CD4-positive, alpha-beta memory T cell (primary cell): ENCODE measurements at regions of chr16 and their contacts with region 1.

Region 1: DNA sequence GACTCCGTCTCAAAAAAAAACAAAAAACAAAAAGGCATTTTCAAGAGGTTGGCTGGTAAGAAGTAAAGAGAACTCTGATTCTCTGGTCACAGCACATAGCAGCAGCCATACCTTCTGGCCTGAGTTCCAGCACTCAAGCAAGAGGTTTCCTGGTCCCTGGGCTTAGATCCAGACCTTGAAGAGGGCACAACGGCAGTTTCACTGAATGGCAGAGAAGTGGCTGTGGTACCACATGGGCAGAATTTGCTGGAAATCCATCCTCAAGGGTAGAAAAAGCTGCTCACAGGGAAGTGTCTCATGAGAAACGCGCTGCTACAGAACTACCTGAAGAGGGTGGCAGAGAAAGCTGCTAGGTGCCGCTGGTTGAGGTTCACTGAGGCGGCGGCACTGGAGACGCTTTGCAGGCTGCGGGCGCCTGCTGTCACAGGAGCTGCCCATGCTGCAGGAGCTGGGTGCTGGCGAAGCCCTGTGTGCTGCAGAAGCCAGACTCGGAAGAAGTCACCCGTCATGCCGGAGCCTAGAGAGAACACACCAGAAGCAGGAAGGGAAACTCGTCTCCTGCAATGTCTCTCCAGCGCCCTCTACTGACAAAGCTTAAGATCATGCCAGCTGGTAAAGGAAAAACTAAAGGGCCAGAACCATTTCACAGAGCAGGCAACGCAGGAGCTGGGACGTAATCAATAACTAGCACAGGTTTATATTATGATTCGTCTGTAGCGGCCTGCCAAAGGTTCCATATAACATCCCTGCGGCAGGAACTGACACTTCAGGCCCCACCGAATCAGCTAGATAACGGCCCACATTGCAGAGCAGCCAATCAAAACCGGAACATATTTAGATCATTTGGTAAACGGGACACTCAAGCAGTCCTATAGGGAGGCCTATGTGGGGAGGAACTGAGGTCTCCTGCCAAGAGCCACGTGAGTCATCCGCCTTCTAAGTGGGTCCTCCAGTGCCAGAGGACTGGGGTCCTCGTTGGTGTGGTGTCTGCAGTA is 5.4 kb upstream of the ZNF213 start:
- DNase-seq: peak; percentile 89 to 92 (median 90)
- H3K4me3 ChIP-seq: peak overlapping the region; percentile 56 to 64
- H3K4me3 Mint-ChIP-seq: peak overlapping the region; percentile 88 to 95 (median 94)
- H3K27ac ChIP-seq: peak overlapping the region; percentile 46
- H3K27ac Mint-ChIP-seq: peak overlapping the region; percentile 83 to 96 (median 89)
- H3K4me1 ChIP-seq: peaks cover 52% of the 10 kb centered on the region
- H3K4me1 Mint-ChIP-seq: peaks cover 26 to 70% (median 42%) of the 10 kb centered on the region in 4 donors
- H3K27me3 ChIP-seq: no peaks in the 10 kb centered on the region
- H3K27me3 Mint-ChIP-seq: no peaks in the 10 kb centered on the region

Region 2: DNA sequence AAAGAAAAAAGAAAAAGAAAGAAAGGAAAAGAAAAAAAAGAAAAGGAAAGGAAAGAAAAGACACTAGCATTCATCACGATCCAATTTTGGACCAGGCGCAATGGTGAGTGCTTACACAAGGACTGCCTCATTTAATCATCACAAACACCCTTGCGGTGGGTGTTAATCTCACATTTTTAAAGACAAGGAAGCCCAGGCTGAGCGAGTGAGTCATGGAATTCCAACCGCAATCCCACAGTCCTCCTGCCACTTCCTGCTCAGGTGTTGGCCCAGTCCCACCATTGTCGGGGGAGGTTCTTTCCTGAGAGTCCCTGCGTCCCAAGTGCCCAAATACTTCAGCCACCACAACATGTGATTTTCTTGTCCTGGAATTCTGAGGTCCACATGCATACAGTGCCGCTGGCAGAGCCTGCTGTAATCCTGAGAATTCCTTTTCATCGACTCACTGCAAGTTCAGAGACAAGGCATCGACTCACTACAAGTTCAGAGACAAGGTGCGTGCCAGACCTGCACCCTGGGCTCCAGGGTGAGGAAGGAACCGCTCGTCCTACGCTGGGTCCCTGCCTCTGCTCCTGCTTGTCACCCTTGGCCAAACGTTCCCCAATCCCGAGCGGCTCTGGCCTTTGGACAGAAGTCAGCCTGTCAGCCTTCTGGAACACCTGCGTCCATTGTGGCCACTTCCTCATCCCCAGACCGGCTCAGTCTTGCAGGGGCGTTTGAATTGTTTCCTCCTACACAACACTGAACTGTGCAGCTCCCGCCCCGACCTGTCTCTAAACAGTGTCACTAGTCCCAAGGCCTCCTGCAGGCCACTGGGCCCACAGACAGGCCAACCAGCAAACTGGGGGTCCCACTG is 293.6 kb before region 1 on chr16:
- CTCF ChIA-PET with region 1: no interaction called
- POLR2A ChIA-PET with region 1: no interaction called
- intact Hi-C with region 1: no loop called
- DNase-seq: no peak
- H3K4me3 ChIP-seq: no peak overlapping the region
- H3K4me3 Mint-ChIP-seq: no peak overlapping the region
- H3K27ac ChIP-seq: no peak overlapping the region
- H3K27ac Mint-ChIP-seq: no peak overlapping the region
- H3K4me1 ChIP-seq: peaks cover 15% of the 10 kb centered on the region
- H3K4me1 Mint-ChIP-seq: peaks cover 4 to 33% (median 18%) of the 10 kb centered on the region in 4 donors
- H3K27me3 ChIP-seq: no peaks in the 10 kb centered on the region
- H3K27me3 Mint-ChIP-seq: peaks cover 4 to 15% of the 10 kb centered on the region in 2 donors

Region 3: DNA sequence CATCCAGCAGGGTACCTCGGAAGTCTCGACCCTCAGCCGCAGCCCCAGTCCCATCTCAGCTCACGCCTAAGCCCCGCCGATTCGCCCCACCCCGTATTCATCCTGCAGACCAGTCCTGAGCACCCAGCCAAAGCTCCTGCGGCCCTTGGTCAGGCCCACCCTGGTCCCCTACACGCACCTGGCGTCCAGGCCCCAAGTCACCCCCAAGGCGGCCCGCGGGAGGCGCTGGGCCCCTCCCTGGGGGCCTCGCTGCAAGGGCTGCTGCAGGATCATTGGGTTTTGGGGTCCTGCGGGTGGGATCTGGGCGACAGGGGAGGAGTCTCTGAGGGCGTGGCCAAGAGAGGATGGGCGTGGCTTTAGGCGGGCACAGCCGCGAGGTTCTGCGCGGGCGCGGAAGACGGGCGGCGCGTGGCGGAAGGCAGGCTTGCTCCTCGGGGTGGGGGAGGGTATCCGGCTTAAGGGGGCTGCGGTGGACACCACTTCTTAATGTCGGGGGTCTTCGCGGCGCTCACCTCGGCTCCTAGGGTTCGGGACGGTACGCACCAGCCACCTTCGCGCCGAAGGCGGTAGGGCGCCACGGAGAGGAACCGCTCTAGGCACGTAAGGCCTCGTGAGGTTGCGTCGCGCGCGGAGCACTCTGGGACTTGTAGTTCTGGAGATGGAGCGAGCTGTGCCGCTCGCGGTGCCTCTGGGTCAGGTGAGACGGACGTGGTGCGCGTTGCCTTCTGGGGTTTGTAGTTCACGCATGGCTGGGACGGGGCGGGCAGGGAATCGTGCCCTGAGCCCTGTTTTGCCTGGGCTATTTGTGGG is 105.6 kb before region 1 on chr16 and contains the starts of genes HCFC1R1 and THOC6:
- CTCF ChIA-PET with region 1: interaction called, 277 read pairs
- POLR2A ChIA-PET with region 1: interaction called, 11 read pairs
- intact Hi-C with region 1: no loop called
- DNase-seq: peak; percentile 95 to 97 (median 95)
- H3K4me3 ChIP-seq: peak within 1 kb of the TSS; percentile 38 to 85
- H3K4me3 Mint-ChIP-seq: peak within 1 kb of the TSS; percentile 87 to 97 (median 93)
- H3K27ac ChIP-seq: peak within 1 kb of the TSS; percentile 90
- H3K27ac Mint-ChIP-seq: peak within 1 kb of the TSS; percentile 97 to 99 (median 99)
- H3K4me1 ChIP-seq: peaks cover 56% of the 10 kb centered on the region
- H3K4me1 Mint-ChIP-seq: peaks cover 22 to 67% (median 45%) of the 10 kb centered on the region in 4 donors
- H3K27me3 ChIP-seq: peaks cover 2% of the 10 kb centered on the region
- H3K27me3 Mint-ChIP-seq: no peaks in the 10 kb centered on the region
- total RNA-seq, gene HCFC1R1: 16.0 to 18.0 TPM
- total RNA-seq, gene THOC6: 18.4 to 22.5 TPM

Region 4: DNA sequence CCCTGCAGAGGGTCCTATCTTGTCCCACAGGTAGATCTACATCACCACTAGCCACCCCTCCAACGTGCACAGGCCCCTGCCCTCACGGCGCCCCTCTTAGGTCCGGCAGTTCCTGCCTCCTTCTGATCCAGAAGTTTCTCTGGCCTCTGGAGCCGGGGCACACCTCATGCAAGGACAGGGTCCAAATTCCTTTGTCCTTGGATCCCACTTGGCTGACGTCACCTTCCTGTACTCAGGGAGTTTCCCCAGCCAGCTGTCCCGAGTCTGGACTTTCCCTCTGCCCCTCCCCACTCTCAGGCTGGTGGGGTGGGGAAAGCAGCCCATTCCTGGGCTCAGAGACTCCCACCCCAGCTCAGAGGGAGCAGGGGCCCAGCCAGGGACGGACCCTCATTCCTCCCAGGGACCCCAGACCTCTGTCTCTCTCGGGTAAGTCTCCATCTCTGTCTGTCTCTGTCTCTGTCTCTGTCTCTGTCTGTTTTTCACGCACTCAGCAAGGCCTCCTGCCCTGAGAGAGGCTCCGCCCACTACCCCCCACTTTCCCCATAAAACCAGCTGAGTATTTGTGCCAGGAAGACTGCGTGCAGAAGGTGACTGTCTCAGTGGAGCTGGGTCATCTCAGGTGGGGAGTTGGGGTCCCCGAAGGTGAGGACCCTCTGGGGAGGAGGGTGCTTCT is 64.2 kb before region 1 on chr16 and contains the start of gene IL32:
- CTCF ChIA-PET with region 1: interaction called, 362 read pairs
- POLR2A ChIA-PET with region 1: interaction called, 129 read pairs
- intact Hi-C with region 1: no loop called
- DNase-seq: peak; percentile 64 to 85 (median 66)
- H3K4me3 ChIP-seq: peak within 1 kb of the TSS; percentile 98
- H3K4me3 Mint-ChIP-seq: peak within 1 kb of the TSS; percentile 98 to 100 (median 100)
- H3K27ac ChIP-seq: peak within 1 kb of the TSS; percentile 98
- H3K27ac Mint-ChIP-seq: peak within 1 kb of the TSS; percentile 91 to 99 (median 96)
- H3K4me1 ChIP-seq: peaks cover 72% of the 10 kb centered on the region
- H3K4me1 Mint-ChIP-seq: peaks cover 34 to 84% (median 55%) of the 10 kb centered on the region in 4 donors
- H3K27me3 ChIP-seq: no peaks in the 10 kb centered on the region
- H3K27me3 Mint-ChIP-seq: no peaks in the 10 kb centered on the region
- total RNA-seq, gene IL32: 752 to 810 TPM

Region 5: DNA sequence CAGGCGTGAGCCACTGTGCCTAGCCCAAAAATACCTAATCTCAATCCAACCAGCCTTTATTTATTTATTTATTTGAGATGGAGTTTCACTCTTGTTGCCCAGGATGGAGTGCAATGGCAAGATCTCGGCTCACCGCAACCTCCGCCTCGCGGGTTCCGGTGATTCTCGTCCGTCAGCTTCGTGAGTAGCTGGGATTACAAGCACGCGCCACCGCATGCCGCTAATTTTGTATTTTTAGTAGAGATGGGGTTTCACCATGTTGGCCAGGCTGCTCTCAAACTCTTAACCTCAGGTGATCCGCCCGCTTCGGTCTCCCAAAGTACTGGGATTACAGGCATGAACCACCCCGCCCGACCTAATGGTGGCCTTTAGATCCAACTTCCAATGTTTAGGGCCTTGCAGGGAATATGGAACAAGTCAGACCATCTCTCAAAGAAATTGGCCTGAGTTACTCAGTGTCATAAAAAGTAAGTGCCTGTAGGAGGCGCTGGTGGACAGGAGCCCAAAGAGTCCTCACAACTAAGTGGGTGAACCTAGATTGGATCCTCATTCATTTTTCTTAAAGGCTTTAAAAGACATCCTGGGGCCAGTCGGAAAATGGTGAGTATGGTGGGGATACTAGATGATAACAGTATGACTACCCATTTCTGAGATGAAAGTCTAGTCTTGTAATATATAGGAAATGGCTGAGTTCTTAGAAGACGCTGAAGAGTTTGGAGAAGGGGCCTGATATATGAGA is 35.0 kb before region 1 on chr16:
- CTCF ChIA-PET with region 1: interaction called, 376 read pairs
- POLR2A ChIA-PET with region 1: interaction called, 146 read pairs
- intact Hi-C with region 1: loop called (anchors 1 kb)
- DNase-seq: peak; percentile 58 to 76 (median 66)
- H3K4me3 ChIP-seq: no peak overlapping the region
- H3K4me3 Mint-ChIP-seq: peak overlapping the region in 5 of 8 donors; percentile 3 to 77 (median 22)
- H3K27ac ChIP-seq: no peak overlapping the region
- H3K27ac Mint-ChIP-seq: peak overlapping the region; percentile 17 to 95 (median 78)
- H3K4me1 ChIP-seq: peaks cover 45% of the 10 kb centered on the region
- H3K4me1 Mint-ChIP-seq: peaks cover 9 to 56% (median 32%) of the 10 kb centered on the region in 4 donors
- H3K27me3 ChIP-seq: no peaks in the 10 kb centered on the region
- H3K27me3 Mint-ChIP-seq: no peaks in the 10 kb centered on the region

Region 6: GRCh38 chr16:3150346-3151218 is 21.1 kb after region 1 on chr16:
- CTCF ChIA-PET with region 1: interaction called, 44 read pairs
- POLR2A ChIA-PET with region 1: interaction called, 123 read pairs
- intact Hi-C with region 1: loop called (anchors 1 kb)
- DNase-seq: peak; percentile 96 to 99 (median 97)
- H3K4me3 ChIP-seq: peak overlapping the region; percentile 77 to 92
- H3K4me3 Mint-ChIP-seq: peak overlapping the region; percentile 87 to 96 (median 91)
- H3K27ac ChIP-seq: peak overlapping the region; percentile 64
- H3K27ac Mint-ChIP-seq: peak overlapping the region; percentile 87 to 100 (median 95)
- H3K4me1 ChIP-seq: peaks cover 27% of the 10 kb centered on the region
- H3K4me1 Mint-ChIP-seq: peaks cover 22 to 47% (median 26%) of the 10 kb centered on the region in 4 donors
- H3K27me3 ChIP-seq: no peaks in the 10 kb centered on the region
- H3K27me3 Mint-ChIP-seq: peaks cover 3 to 8% of the 10 kb centered on the region in 2 donors

Region 7: DNA sequence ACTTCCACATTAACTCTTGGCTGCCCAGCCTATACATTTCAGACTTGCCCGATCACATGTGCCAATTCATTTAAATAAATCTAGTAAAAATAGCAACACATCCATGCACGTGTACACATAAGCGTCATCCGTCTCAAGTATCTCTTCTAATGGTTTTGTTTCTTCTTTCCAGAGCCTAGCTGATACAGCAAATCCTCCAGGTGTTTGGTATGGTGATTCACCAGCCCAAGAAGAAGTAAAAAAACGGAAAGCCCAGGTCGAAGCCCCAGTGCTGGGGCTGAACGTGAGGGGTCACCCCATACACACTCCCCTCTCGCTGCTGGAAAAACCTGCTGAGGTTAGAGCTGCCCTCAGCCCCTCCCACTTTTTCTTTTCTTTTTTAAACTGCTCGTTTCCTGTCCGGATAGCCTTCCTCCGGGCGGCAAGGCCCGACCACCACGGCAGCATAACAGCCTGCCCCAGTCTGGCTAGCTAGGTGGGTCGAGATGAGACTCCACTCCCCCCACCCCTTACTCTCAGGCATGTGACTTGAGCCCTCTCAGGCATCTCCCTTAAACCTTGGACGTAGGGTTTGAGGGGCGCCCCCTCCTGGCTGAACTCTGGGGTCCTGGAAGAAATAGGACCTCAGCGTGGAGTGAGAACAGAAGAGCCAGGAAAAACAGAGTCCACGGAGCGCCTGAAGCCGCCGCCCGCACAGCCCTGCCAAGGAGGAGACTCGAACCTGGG is 44.6 kb after region 1 on chr16:
- CTCF ChIA-PET with region 1: interaction called, 9 read pairs
- POLR2A ChIA-PET with region 1: interaction called, 19 read pairs
- intact Hi-C with region 1: no loop called
- DNase-seq: no peak
- H3K4me3 ChIP-seq: no peak overlapping the region
- H3K4me3 Mint-ChIP-seq: peak overlapping the region in 7 of 8 donors; percentile 4 to 58 (median 35)
- H3K27ac ChIP-seq: no peak overlapping the region
- H3K27ac Mint-ChIP-seq: peak overlapping the region in 2 of 7 donors; percentile 17 to 75
- H3K4me1 ChIP-seq: peaks cover 48% of the 10 kb centered on the region
- H3K4me1 Mint-ChIP-seq: peaks cover 18 to 46% (median 35%) of the 10 kb centered on the region in 4 donors
- H3K27me3 ChIP-seq: peaks cover 38% of the 10 kb centered on the region
- H3K27me3 Mint-ChIP-seq: peaks cover 39 to 41% of the 10 kb centered on the region in 2 donors